Heart left ventricle (tissue), 16 donors: ENCODE measurements at regions of chr5 and their contacts with region 1.

Region 1: DNA sequence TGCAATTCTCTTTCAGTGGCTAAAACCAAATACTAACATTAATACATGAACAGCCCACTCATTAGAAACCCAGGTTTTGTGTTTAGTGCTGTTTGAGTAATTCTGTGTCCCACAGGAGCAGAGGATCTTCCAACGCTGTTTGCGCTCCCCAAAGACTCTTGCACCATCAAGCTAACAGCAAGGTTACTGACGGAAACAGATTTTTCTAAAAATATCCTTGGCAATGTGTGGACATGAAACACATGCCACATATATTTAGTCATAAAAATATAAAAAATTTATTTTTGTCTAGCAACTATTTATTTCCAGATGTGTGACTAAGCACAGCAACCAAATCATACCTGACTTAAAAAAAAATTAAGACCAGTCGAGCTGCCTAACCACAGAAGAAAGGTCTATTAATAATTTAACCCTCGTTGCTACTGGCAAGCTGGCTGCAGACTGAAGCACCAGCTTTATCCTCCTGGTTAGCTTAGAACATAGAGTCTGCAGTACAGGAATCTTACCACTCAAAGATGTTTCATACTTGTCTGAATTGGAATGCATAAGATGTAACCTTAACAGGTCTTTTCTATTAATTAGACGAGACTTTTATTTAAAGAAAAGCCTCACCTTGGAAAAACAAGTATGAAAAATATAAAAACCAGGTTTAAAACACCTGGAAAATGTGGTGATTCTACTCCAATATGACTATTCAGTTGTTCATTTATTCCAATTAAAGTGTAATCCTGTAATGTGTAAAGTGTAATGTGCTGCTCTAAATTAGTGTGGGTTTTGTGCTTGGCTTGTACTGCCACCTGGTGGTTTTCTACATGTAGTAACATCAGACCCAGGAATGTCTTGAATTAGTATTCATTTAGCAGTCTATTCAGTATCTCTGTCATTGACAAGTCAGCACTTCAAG is 272.5 kb downstream of the EPB41L4A start:
- DNase-seq: peak in 4 of 5 donors; percentile 44 to 68 (median 56)
- ATAC-seq: peak; percentile 77 to 90 (median 88)
- H3K4me3 ChIP-seq: peak overlapping the region in 1 of 12 donors; percentile 4
- H3K27ac ChIP-seq: peak overlapping the region in 5 of 12 donors; percentile 11 to 51 (median 35)
- H3K4me1 ChIP-seq: peaks cover 0 to 36% (median 17%) of the 10 kb centered on the region in 12 donors
- H3K27me3 ChIP-seq: no peaks in the 10 kb centered on the region
- CTCF ChIP-seq: peak; percentile 78 to 94 (median 86)
- POLR2A ChIP-seq: no peak

Region 2: DNA sequence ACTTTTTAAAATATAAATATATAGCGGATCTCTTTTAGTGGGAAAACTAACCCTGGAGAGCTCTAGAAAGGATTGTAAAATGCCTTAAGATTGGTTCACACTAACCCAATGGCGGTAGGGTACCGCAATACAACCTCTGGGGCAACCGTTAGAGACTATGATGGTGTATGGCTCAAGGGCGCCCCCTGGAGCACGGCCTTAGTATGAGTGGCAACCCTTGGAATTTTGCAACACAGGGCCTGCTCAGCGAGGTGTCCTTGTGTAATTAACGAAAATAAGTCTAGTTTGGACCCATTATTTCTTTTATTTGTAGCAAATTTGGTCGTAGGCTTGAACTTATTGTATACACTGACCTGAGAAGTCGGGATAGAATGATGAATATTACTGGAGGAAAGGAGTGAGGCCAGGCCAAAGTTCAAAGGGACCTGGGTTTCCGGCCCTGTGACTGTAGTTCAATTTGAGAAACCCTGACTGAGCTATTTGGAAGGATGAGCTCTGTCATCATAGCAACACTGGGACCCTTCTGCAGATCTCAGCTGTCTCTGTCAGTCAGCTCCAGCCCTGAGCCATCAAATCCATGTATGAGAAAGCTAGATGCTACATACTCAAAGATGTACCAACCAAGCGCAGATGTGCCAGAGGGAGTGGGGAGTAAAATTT is 867.6 kb before region 1 on chr5:
- intact Hi-C with region 1: loop called in 1 of 10 experiments (anchors 10 kb)
- DNase-seq: peak; percentile 11 to 74 (median 37)
- ATAC-seq: peak in 1 of 4 donors; percentile 68
- H3K4me3 ChIP-seq: no peak overlapping the region
- H3K27ac ChIP-seq: no peak overlapping the region
- H3K4me1 ChIP-seq: no peaks in the 10 kb centered on the region
- H3K27me3 ChIP-seq: no peaks in the 10 kb centered on the region
- CTCF ChIP-seq: peak; percentile 48 to 80 (median 69)
- POLR2A ChIP-seq: no peak

Region 3: GRCh38 chr5:111550279-111551020 is 596.1 kb before region 1 on chr5:
- intact Hi-C with region 1: loop called (anchors 1 to 5 kb)
- DNase-seq: peak; percentile 71 to 89 (median 84)
- ATAC-seq: peak; percentile 88 to 94 (median 92)
- H3K4me3 ChIP-seq: peak overlapping the region in 3 of 12 donors; percentile 2 to 15 (median 2)
- H3K27ac ChIP-seq: peak overlapping the region; percentile 14 to 83 (median 74)
- H3K4me1 ChIP-seq: peaks cover 0 to 29% (median 14%) of the 10 kb centered on the region in 12 donors
- H3K27me3 ChIP-seq: no peaks in the 10 kb centered on the region
- CTCF ChIP-seq: peak; percentile 58 to 81 (median 75)
- POLR2A ChIP-seq: no peak

Region 4: GRCh38 chr5:111762895-111763294 is 383.7 kb before region 1 on chr5:
- intact Hi-C with region 1: loop called in 8 of 10 experiments (anchors 5 to 10 kb)
- DNase-seq: no peak
- ATAC-seq: peak in 2 of 4 donors; percentile 42 to 48
- H3K4me3 ChIP-seq: no peak overlapping the region
- H3K27ac ChIP-seq: peak overlapping the region in 4 of 12 donors; percentile 11 to 57 (median 42)
- H3K4me1 ChIP-seq: peaks cover 0 to 9% (median 5%) of the 10 kb centered on the region in 12 donors
- H3K27me3 ChIP-seq: no peaks in the 10 kb centered on the region
- CTCF ChIP-seq: no peak
- POLR2A ChIP-seq: no peak

Region 5: DNA sequence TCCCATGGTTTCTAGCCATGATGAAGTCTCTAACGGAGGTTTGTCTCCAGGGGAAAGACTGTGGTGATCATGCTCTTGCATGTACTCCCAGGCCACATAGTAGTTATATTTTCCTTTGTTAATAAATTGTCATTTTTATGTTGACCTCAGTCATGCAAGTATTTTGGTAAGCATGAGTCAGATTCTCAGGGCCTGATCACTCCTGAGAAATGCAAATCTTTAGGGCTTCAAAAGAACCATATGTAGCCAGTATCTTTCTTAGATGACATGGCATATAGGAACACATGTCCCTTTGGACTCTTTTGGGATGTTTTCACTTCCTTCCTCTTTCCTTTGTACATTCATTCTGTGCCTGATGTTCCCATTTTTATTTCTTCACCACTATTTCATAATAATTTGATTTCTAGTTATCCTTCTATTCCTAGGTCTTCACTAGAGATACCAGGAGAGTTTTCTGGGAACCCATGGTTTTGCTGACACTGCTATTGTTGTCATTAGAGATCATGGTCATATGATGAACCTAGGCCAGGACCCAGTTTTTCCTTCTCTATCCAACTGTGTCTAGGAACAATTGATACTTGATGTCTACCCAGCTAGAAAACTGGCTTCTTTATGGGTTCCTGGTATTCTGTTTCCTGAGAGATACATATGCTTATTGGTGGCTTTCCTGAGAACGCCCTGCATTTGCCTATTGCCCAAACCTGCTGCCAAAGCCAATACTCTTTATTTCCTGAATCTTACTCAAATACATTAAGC is 141.5 kb before region 1 on chr5:
- intact Hi-C with region 1: loop called in 3 of 10 experiments (anchors 5 to 10 kb)
- DNase-seq: no peak
- ATAC-seq: peak in 1 of 4 donors; percentile 20
- H3K4me3 ChIP-seq: no peak overlapping the region
- H3K27ac ChIP-seq: no peak overlapping the region
- H3K4me1 ChIP-seq: peaks cover 0 to 8% (median 0%) of the 10 kb centered on the region in 12 donors
- H3K27me3 ChIP-seq: no peaks in the 10 kb centered on the region
- CTCF ChIP-seq: no peak
- POLR2A ChIP-seq: no peak

Region 6: DNA sequence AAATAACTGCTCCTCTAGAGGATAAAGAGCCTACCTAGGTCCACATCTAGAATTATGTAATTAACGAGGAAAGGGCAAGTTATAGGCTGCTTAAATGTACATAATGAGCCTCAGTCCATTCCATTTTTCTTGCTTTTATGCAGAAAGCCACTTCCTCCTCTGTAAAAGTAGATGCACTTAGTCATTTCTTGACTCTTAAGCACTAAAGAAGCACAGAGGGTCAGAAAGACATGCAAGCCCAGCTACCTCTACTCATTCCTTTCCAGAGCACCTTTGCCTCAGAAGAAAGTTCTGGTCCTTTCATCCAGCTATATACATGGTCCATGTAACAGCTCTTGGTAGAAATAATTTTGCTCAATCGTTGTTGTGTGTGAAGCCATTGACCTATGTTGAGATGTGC is 81.6 kb before region 1 on chr5:
- intact Hi-C with region 1: no loop called
- DNase-seq: no peak
- ATAC-seq: no peak
- H3K4me3 ChIP-seq: no peak overlapping the region
- H3K27ac ChIP-seq: no peak overlapping the region
- H3K4me1 ChIP-seq: no peaks in the 10 kb centered on the region
- H3K27me3 ChIP-seq: no peaks in the 10 kb centered on the region
- CTCF ChIP-seq: no peak
- POLR2A ChIP-seq: no peak